Left lung (tissue), 14 donors: ENCODE measurements at regions of chr2 and their contacts with region 1.

Region 1: GRCh38 chr2:17851731-17852585 is 26.5 kb upstream of the KCNS3 start:
- DNase-seq: peak in 3 of 4 donors; percentile 30 to 61 (median 31)
- ATAC-seq: peak; percentile 95
- H3K4me3 ChIP-seq: no peak overlapping the region
- H3K27ac ChIP-seq: no peak overlapping the region
- H3K4me1 ChIP-seq: no peaks in the 10 kb centered on the region
- H3K27me3 ChIP-seq: no peaks in the 10 kb centered on the region
- CTCF ChIP-seq: peak; percentile 67 to 84

Region 2: DNA sequence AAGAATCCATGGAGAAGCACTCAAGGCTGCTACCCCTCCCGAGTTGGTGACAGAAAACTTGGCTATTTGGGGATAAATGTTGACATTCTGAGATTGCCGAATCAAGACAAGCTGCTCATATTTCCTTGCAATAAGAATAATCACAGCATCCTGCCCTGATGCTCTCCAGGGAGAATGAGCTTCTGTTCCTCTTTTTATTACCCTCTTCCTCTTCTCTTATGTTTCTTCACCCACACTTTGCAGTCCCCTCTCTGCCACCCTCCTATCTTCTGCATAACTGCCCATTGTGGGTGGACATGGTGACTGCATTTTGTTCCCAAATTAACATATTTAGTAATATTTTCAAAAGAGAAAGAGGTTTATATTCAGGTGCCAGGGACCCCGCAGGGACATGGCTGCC is 47.6 kb before region 1 on chr2:
- intact Hi-C with region 1: no loop called
- DNase-seq: no peak
- ATAC-seq: peak; percentile 49
- H3K4me3 ChIP-seq: no peak overlapping the region
- H3K27ac ChIP-seq: no peak overlapping the region
- H3K4me1 ChIP-seq: no peaks in the 10 kb centered on the region
- H3K27me3 ChIP-seq: no peaks in the 10 kb centered on the region
- CTCF ChIP-seq: no peak

Region 3: DNA sequence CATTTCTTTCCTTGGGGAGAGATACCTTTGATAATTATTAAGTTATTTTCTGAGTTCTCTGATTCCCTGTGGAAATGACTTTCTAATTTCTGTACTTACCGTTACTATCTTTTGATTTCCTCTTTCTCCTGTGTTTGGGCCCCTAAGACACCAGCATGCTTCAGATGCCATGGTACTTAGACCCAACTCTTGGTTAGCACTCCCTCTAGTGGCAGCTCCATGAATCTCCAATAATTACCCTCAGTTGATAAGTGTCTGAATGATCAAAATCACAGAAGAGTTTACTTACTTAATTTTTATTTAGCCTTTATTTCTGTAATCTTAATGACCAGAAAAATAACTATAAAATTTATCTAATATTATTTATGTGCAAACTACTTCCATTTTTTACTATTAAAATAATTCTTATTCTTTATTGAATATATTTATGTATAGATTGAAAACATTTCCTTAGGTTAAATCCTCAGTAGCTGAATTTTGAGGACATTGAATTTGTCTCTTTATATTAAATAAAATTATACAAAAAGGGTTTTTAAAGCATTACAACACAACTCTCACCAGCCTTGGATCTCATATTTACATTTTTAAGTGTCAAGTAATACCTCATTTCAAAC is 326.9 kb after region 1 on chr2:
- intact Hi-C with region 1: loop called in 1 of 2 experiments (anchors 10 kb)
- DNase-seq: no peak
- ATAC-seq: peak; percentile 88
- H3K4me3 ChIP-seq: no peak overlapping the region
- H3K27ac ChIP-seq: no peak overlapping the region
- H3K4me1 ChIP-seq: no peaks in the 10 kb centered on the region
- H3K27me3 ChIP-seq: no peaks in the 10 kb centered on the region
- CTCF ChIP-seq: peak; percentile 63 to 73

Region 4: GRCh38 chr2:18378020-18378653 is 526.2 kb after region 1 on chr2:
- intact Hi-C with region 1: loop called in 1 of 2 experiments (anchors 10 kb)
- DNase-seq: peak in 2 of 4 donors; percentile 48 to 69
- ATAC-seq: peak; percentile 87
- H3K4me3 ChIP-seq: no peak overlapping the region
- H3K27ac ChIP-seq: no peak overlapping the region
- H3K4me1 ChIP-seq: no peaks in the 10 kb centered on the region
- H3K27me3 ChIP-seq: no peaks in the 10 kb centered on the region
- CTCF ChIP-seq: peak; percentile 70 to 78